ENCODE measurements at regions of chr16 and their contacts with region 1.

Region 1: GRCh38 chr16:24130494-24131085 is 125.5 kb upstream of the CACNG3 start:
- DNase-seq: no peak
- H3K4me3 ChIP-seq: no peak overlapping the region
- H3K4me3 Mint-ChIP-seq: no peak overlapping the region
- H3K27ac ChIP-seq: no peak overlapping the region
- H3K27ac Mint-ChIP-seq: peak overlapping the region in 1 of 8 donors; percentile 44
- H3K4me1 ChIP-seq: no peaks in the 10 kb centered on the region
- H3K4me1 Mint-ChIP-seq: peaks cover 3 to 7% (median 5%) of the 10 kb centered on the region in 3 donors
- H3K27me3 ChIP-seq: no peaks in the 10 kb centered on the region
- H3K27me3 Mint-ChIP-seq: no peaks in the 10 kb centered on the region

Region 2: DNA sequence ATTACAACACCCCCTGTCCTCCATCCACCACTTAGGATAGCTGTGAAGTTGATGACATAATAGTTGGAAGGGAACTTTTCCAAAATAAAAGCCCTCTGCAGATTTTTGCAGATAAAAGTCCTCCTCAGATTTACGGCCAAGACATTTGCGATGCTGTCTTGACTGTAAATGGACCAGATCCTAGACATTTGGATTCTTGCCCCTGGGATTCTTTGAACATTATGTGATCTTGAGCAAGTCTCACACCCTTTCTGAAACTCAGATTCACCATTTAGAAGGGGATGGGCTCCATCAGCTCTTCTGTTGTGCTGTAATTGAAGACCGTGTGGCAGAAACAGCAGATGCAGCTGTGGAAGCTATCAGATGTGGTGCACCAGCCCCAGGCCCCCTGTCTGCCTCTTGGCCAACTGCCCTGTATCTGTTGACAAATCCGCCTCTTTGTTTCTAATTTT is 28.4 kb before region 1 on chr16:
- CTCF ChIA-PET with region 1: no interaction called
- POLR2A ChIA-PET with region 1: no interaction called
- DNase-seq: no peak
- H3K4me3 ChIP-seq: no peak overlapping the region
- H3K4me3 Mint-ChIP-seq: no peak overlapping the region
- H3K27ac ChIP-seq: no peak overlapping the region
- H3K27ac Mint-ChIP-seq: peak overlapping the region in 2 of 8 donors; percentile 36 to 64
- H3K4me1 ChIP-seq: no peaks in the 10 kb centered on the region
- H3K4me1 Mint-ChIP-seq: peaks cover 15 to 23% (median 19%) of the 10 kb centered on the region in 3 donors
- H3K27me3 ChIP-seq: no peaks in the 10 kb centered on the region
- H3K27me3 Mint-ChIP-seq: peaks cover 0 to 2% of the 10 kb centered on the region in 2 donors

Region 3: DNA sequence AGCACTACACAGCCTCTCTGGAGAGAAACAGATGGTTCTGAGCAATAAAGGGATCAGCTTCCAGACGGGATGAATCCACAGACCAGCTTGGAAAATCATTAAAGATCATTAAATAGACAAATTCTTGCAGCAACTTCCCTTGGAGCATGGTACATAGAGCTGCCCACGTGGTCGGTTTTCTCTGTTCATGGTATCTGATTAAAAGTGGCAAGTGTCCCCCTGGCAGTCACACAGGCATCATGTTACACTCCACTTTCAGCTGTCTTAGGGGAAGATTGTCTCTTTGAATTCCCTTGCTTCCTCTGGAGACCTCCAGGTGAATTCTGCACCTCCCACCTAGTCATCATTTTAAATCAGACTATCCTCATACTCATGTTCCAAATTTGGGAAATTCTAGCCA is 33.3 kb after region 1 on chr16:
- CTCF ChIA-PET with region 1: no interaction called
- POLR2A ChIA-PET with region 1: interaction called, 10 read pairs
- DNase-seq: no peak
- H3K4me3 ChIP-seq: no peak overlapping the region
- H3K4me3 Mint-ChIP-seq: no peak overlapping the region
- H3K27ac ChIP-seq: no peak overlapping the region
- H3K27ac Mint-ChIP-seq: peak overlapping the region in 3 of 8 donors; percentile 0 to 35 (median 2)
- H3K4me1 ChIP-seq: no peaks in the 10 kb centered on the region
- H3K4me1 Mint-ChIP-seq: peaks cover 3 to 16% (median 16%) of the 10 kb centered on the region in 3 donors
- H3K27me3 ChIP-seq: no peaks in the 10 kb centered on the region
- H3K27me3 Mint-ChIP-seq: no peaks in the 10 kb centered on the region

Measured in CD8-positive, alpha-beta memory T cell (primary cell).